Activated CD4-positive, alpha-beta memory T cell treated with anti-CD3 and anti-CD28 coated beads for 36 hours (primary cell): ENCODE measurements at regions of chr2 and their contacts with region 1.

Region 1: GRCh38 chr2:85354286-85355072 is at the starts of genes ELMOD3 and RETSAT:
- DNase-seq: peak; percentile 98
- H3K4me3 Mint-ChIP-seq: peak within 1 kb of the TSS; percentile 100
- H3K27ac Mint-ChIP-seq: peak within 1 kb of the TSS; percentile 95
- H3K4me1 Mint-ChIP-seq: peaks cover 41% of the 10 kb centered on the region
- H3K27me3 Mint-ChIP-seq: no peaks in the 10 kb centered on the region
- total RNA-seq, gene ELMOD3: 11.1 to 15.0 TPM
- total RNA-seq, gene RETSAT: 22.6 to 22.8 TPM

Region 2: GRCh38 chr2:85057226-85057962 is 297.1 kb before region 1 on chr2:
- CTCF ChIA-PET with region 1: no interaction called
- POLR2A ChIA-PET with region 1: no interaction called
- intact Hi-C with region 1: no loop called
- DNase-seq: peak; percentile 26
- H3K4me3 Mint-ChIP-seq: no peak overlapping the region
- H3K27ac Mint-ChIP-seq: peak overlapping the region; percentile 23
- H3K4me1 Mint-ChIP-seq: peaks cover 18% of the 10 kb centered on the region
- H3K27me3 Mint-ChIP-seq: no peaks in the 10 kb centered on the region

Region 3: GRCh38 chr2:85318222-85319074 is 36.0 kb before region 1 on chr2:
- CTCF ChIA-PET with region 1: no interaction called
- POLR2A ChIA-PET with region 1: interaction called, 11 read pairs
- intact Hi-C with region 1: no loop called
- DNase-seq: peak; percentile 70
- H3K4me3 Mint-ChIP-seq: peak overlapping the region; percentile 30
- H3K27ac Mint-ChIP-seq: peak overlapping the region; percentile 82
- H3K4me1 Mint-ChIP-seq: peaks cover 57% of the 10 kb centered on the region
- H3K27me3 Mint-ChIP-seq: no peaks in the 10 kb centered on the region

Region 4: GRCh38 chr2:85405076-85405402 is 50.6 kb after region 1 on chr2:
- CTCF ChIA-PET with region 1: no interaction called
- POLR2A ChIA-PET with region 1: no interaction called
- intact Hi-C with region 1: loop called (anchors 1 kb)
- DNase-seq: no peak
- H3K4me3 Mint-ChIP-seq: peak overlapping the region; percentile 25
- H3K27ac Mint-ChIP-seq: peak overlapping the region; percentile 65
- H3K4me1 Mint-ChIP-seq: peaks cover 35% of the 10 kb centered on the region
- H3K27me3 Mint-ChIP-seq: no peaks in the 10 kb centered on the region